AG04449 (cell line): ENCODE measurements at regions of chr6 and their contacts with region 1.

Region 1: GRCh38 chr6:131914967-131915751 is 36.0 kb downstream of the CCN2 start:
- DNase-seq: no peak
- H3K4me3 ChIP-seq: no peak overlapping the region
- CTCF ChIP-seq: peak; percentile 72

Region 2: DNA sequence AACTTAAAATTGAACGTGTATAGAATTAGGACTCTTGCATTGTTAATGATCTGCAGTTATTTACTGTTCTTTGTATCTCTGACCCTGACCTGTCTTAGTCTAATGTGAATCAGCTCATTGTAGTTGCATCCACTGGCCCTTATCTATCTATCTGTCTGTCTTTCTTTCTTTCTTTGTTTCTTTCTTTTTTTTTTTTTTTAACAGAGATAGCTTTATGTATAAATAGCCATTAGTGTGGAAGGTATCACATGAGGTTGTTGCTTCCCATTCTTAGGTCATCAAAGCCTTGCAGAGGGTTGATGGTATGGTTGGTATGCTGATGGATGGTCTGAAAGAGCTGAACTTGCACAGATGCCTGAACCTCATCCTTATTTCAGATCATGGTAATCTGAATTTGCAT is 47.4 kb before region 1 on chr6:
- CTCF ChIA-PET with region 1: interaction called, 16 read pairs
- POLR2A ChIA-PET with region 1: no interaction called
- DNase-seq: no peak
- H3K4me3 ChIP-seq: no peak overlapping the region
- CTCF ChIP-seq: no peak

Region 3: DNA sequence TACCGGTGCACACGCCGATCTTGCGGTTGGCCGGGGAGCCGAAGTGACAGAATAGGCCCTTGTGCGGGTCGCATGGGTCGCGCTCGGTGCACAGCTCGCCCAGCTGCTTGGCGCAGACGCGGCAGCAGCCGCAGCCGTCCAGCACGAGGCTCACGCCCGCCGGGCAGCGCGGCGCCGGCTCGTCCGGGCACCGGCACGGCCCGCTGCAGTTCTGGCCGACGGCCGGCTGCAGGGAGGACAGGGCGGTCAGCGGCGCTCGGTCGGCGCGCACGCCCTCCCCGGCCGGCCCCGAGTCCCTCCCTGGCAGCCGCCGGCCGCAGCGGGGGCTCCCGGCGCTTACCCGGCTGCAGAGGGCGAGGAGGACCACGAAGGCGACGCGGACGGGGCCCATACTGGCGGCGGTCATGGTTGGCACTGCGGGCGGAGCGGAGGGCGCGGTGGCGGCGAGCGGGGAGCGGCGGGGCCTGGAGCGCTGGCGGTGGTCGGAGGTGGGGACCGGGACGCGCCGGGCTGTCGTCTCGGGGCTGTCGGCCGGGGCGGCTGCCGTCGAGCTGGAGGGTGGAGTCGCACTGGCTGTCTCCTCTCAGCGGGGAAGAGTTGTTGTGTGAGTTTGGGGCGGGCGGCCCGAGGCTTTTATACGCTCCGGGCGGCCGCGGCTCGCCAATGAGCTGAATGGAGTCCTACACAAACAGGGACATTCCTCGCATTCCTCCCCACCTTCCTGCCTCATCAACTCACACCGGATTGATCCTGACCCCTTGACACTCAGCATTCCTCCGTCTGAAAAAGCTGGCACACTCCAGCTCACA is 35.8 kb after region 1 on chr6 and contains the start of gene CCN2:
- CTCF ChIA-PET with region 1: no interaction called
- POLR2A ChIA-PET with region 1: no interaction called
- DNase-seq: peak; percentile 99
- H3K4me3 ChIP-seq: peak within 1 kb of the TSS; percentile 97
- CTCF ChIP-seq: no peak

Region 4: DNA sequence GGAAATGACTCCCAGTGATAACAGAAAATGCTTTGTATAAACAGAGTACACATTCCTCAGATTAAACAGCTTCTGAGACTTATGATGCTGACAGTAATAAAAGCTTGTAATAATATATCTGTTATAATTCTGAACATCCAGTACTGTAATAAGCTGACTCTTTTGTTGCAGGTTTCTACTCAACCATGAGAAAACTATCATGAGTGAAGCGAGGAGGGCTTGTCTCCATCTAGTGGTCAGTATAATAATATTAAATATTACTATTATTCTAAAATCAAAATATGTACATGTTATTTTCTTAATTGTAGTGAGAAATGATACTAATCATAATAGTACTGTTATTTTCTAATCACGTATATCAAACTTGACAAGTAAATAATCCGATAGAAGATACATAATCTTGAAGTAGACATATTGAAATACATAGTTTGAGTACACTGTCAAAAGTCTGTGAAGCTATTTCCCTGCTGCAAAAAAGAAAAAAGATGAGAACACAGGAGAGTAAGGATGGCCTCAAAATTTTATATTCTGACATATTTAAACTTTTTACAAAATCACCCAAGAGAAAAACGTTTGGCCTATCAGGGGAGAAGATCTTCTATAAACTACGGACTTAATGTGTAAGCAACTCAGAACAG is 303.0 kb after region 1 on chr6:
- CTCF ChIA-PET with region 1: interaction called, 43 read pairs
- POLR2A ChIA-PET with region 1: no interaction called
- DNase-seq: no peak
- H3K4me3 ChIP-seq: no peak overlapping the region
- CTCF ChIP-seq: peak; percentile 13

Region 5: GRCh38 chr6:132270726-132271402 is 355.7 kb after region 1 on chr6:
- CTCF ChIA-PET with region 1: interaction called, 166 read pairs
- POLR2A ChIA-PET with region 1: no interaction called
- DNase-seq: no peak
- H3K4me3 ChIP-seq: no peak overlapping the region
- CTCF ChIP-seq: no peak

Region 6: GRCh38 chr6:132483779-132484679 is 568.9 kb after region 1 on chr6:
- CTCF ChIA-PET with region 1: interaction called, 14 read pairs
- POLR2A ChIA-PET with region 1: no interaction called
- DNase-seq: no peak
- H3K4me3 ChIP-seq: no peak overlapping the region
- CTCF ChIP-seq: peak; percentile 20